ENCODE measurements at regions of chr11 and their contacts with region 1.

Region 1: DNA sequence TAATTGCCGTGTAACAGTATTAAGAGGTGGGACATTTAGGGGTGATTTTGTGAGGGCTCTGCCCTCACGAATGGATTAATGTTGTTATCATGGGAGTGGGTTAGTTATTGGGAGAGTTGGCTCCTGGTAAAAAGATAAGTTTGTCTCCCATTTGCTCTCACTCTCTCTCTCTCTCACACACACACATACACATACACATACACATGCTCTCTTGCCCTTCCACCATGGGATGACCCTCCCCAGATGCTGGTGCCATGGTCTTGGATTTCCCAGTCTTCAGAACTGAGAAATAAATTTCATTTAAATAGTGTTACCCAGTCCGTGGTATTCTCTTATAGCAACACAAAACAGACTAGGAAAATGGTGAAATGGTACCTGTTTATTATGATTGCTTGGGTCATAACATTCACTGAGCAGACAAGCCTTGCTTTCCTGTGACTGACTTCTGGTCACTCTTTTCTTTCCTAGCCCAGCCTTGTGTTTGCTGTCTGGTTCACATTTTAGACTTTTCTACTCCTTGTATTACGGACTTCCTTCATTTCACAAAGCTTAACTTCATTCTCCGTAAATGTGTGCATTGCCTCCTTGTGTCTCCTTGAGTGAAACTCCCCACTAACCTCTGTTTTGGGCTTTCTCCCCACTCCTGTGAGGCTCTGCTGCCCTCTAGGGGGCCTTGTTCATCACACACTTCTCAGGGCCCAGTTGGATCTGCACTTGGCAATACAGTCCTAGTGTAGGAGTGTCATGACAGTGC is 206.5 kb upstream of the CTSC start:
- DNase-seq: peak; percentile 87
- H3K4me3 Mint-ChIP-seq: no peak overlapping the region
- H3K27ac Mint-ChIP-seq: peak overlapping the region; percentile 7
- H3K4me1 Mint-ChIP-seq: peaks cover 6% of the 10 kb centered on the region
- H3K27me3 Mint-ChIP-seq: peaks cover 10% of the 10 kb centered on the region

Region 2: DNA sequence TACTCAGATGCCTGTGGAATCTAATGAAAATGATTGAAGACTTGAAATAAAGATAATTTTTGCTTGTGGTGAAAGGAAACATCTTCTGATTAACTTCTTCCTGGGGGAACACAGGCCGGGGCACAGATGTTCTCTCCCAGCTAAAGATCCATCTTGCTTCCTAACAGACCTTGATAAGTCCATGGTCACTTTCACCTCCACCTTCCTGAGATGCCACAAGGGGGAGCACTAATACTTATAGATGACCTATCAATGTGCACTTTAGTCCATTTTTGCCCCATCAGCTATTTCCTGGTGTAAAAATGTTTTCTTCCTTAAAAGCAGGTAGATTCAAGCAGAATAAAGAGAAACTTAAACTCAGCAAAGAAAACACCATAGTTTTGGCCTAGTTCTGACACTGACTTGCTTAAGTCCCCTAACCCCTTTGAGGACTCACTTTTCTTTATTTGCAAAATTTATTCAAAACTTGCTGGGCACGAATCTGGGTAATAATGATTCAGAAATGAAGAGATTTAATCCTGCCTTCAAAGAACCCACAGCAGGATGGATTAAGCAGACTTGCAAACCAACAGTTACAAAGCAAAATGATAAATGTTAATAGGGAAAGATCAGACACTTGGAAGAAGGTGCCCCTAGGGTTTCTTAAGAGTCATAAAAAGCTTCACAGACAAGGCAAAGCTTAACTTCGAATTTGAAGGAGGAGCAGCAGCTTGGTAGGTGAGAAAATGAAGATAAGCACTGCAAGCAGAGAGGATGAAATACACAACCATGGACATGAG is 527.5 kb before region 1 on chr11:
- CTCF ChIA-PET with region 1: interaction called, 46 read pairs
- POLR2A ChIA-PET with region 1: no interaction called
- DNase-seq: peak; percentile 60
- H3K4me3 Mint-ChIP-seq: no peak overlapping the region
- H3K27ac Mint-ChIP-seq: no peak overlapping the region
- H3K4me1 Mint-ChIP-seq: no peaks in the 10 kb centered on the region
- H3K27me3 Mint-ChIP-seq: no peaks in the 10 kb centered on the region

Region 3: DNA sequence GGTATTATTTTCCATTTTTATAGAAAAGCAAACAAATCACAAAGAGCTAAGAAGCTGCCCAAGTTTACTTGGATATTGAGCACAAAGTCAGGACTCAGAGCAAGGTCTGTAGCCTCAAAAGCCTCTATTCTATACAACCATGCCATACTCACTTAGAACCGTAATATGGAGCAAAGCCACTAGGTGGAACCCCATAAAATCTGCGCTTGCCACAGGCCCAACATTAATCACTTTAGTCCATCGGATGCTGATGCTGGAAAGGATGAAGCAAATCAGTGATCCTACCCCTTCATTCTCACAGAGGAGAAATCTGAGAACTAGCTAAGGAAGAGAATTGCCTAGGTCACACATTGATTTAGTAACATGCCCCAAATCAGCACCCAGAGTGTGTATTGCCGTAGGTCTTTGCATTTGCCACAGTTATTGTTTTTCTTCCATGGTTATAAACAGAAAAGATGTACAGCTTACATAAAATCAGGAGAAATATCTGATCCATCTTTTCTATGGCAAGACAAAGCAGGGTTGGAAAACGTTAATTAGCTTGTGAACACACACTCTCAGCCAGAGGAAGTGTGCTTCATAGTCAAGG is 312.1 kb before region 1 on chr11:
- CTCF ChIA-PET with region 1: interaction called, 48 read pairs
- POLR2A ChIA-PET with region 1: no interaction called
- DNase-seq: peak; percentile 19
- H3K4me3 Mint-ChIP-seq: no peak overlapping the region
- H3K27ac Mint-ChIP-seq: no peak overlapping the region
- H3K4me1 Mint-ChIP-seq: no peaks in the 10 kb centered on the region
- H3K27me3 Mint-ChIP-seq: peaks cover 2% of the 10 kb centered on the region